ENCODE measurements at regions of chr20 and their contacts with region 1.

Region 1: GRCh38 chr20:1313236-1313964 is 15.5 kb downstream of the SDCBP2 start:
- DNase-seq: peak; percentile 83
- H3K4me3 ChIP-seq: peak overlapping the region; percentile 22 to 31
- H3K27ac ChIP-seq: no peak overlapping the region
- H3K4me1 ChIP-seq: peaks cover 3% of the 10 kb centered on the region
- H3K27me3 ChIP-seq: no peaks in the 10 kb centered on the region
- CTCF ChIP-seq: peak; percentile 86 to 99 (median 93)
- POLR2A ChIP-seq: no peak

Region 2: GRCh38 chr20:667391-667964 is 645.9 kb before region 1 on chr20:
- intact Hi-C with region 1: no loop called
- DNase-seq: peak; percentile 74
- H3K4me3 ChIP-seq: no peak overlapping the region
- H3K27ac ChIP-seq: no peak overlapping the region
- H3K4me1 ChIP-seq: no peaks in the 10 kb centered on the region
- H3K27me3 ChIP-seq: no peaks in the 10 kb centered on the region
- CTCF ChIP-seq: peak; percentile 52 to 71 (median 56)
- POLR2A ChIP-seq: no peak

Region 3: GRCh38 chr20:1437235-1437904 is 124.0 kb after region 1 on chr20:
- intact Hi-C with region 1: loop called (anchors 10 kb)
- DNase-seq: peak; percentile 76
- H3K4me3 ChIP-seq: no peak overlapping the region
- H3K27ac ChIP-seq: no peak overlapping the region
- H3K4me1 ChIP-seq: no peaks in the 10 kb centered on the region
- H3K27me3 ChIP-seq: no peaks in the 10 kb centered on the region
- CTCF ChIP-seq: peak; percentile 68 to 77 (median 73)
- POLR2A ChIP-seq: no peak

Region 4: DNA sequence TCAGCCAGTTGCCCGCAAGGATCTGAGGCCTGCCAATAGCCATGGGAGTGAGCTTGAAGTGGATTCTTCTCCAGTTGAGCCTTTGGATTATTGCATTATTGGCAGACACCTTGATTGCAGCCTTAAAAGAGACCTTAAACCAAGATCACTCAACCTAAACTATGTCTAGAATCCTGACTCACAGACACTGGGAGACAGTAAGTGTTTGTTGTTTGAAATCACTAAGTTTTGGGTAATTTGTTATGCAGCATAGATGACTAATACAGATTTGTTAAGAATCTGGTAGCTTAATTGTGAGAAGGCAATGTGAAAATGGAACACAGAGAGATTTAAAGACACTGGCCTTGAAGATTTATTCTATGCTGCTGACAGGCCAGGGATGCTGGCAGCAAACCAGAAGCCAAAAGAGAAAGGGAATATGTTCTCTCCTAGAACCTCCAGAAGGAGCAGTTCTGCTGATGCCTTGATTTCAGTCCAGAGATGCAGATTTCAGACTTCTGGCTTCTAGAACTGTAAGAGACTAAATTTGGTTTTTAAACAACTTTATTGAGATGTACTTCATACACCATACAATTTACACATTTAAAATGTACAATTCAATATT is 226.5 kb after region 1 on chr20:
- intact Hi-C with region 1: no loop called
- DNase-seq: no peak
- H3K4me3 ChIP-seq: no peak overlapping the region
- H3K27ac ChIP-seq: no peak overlapping the region
- H3K4me1 ChIP-seq: no peaks in the 10 kb centered on the region
- H3K27me3 ChIP-seq: no peaks in the 10 kb centered on the region
- CTCF ChIP-seq: no peak
- POLR2A ChIP-seq: no peak

Region 5: GRCh38 chr20:1651268-1652058 is 338.1 kb after region 1 on chr20:
- intact Hi-C with region 1: no loop called
- DNase-seq: no peak
- H3K4me3 ChIP-seq: no peak overlapping the region
- H3K27ac ChIP-seq: no peak overlapping the region
- H3K4me1 ChIP-seq: no peaks in the 10 kb centered on the region
- H3K27me3 ChIP-seq: no peaks in the 10 kb centered on the region
- CTCF ChIP-seq: no peak
- POLR2A ChIP-seq: no peak

Measured in testis (tissue), 5 donors.